Gastrocnemius medialis (tissue), 4 donors: ENCODE measurements at regions of chr10 and their contacts with region 1.

Region 1: GRCh38 chr10:123154092-123154921 is at the start of gene BUB3:
- DNase-seq: peak; percentile 98 to 99
- ATAC-seq: peak; percentile 99
- H3K4me3 ChIP-seq: peak within 1 kb of the TSS; percentile 68 to 99 (median 90)
- H3K27ac ChIP-seq: peak within 1 kb of the TSS; percentile 81 to 90 (median 86)
- H3K4me1 ChIP-seq: peaks cover 32 to 34% of the 10 kb centered on the region in 2 donors
- H3K27me3 ChIP-seq: peaks cover 39 to 43% (median 41%) of the 10 kb centered on the region in 3 donors
- CTCF ChIP-seq: peak in 3 of 5 experiments; percentile 32 to 53 (median 40)
- POLR2A ChIP-seq: peak; percentile 72 to 76
- total RNA-seq, gene BUB3: 43.0 to 84.0 (median 49.2) TPM

Region 2: DNA sequence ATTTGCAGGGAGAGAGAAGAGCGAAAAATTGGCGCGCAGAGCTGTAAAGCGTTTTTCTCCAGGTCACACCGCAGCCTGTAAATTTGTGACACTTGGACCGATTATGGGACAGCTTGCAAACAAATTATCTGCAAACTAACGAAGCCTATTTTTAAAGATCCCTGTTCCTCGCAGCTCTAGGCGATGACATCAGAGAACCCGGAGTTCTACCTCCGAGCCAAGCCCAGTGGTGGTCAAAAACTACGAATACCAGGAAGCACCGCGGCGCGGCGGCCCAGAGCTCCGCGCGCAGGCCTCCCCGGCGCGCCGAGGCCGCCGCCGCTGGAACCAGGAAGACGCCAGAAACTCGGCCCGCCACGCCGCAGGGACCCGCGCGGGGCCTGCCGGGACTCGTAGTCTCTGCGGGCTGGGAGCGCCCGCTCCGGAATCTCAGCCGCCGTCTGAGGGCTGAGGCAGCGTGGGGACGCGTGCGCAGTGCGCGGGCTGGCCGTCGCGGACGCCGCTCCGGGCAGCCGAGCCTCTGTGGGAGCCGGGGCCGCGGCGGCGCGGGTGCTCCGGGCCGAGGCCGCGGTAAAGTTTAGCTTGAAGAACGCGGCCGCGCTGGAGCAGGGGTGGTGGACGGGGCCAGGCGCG is 780.0 kb before region 1 on chr10 and contains the start of gene PLEKHA1:
- in situ Hi-C with region 1: no loop called
- intact Hi-C with region 1: loop called (anchors 2 kb)
- DNase-seq: peak; percentile 91 to 94
- ATAC-seq: peak; percentile 90 to 92
- H3K4me3 ChIP-seq: peak within 1 kb of the TSS; percentile 64 to 96 (median 70)
- H3K27ac ChIP-seq: peak within 1 kb of the TSS; percentile 82 to 99 (median 92)
- H3K4me1 ChIP-seq: peaks cover 31 to 37% of the 10 kb centered on the region in 2 donors
- H3K27me3 ChIP-seq: no peaks in the 10 kb centered on the region
- CTCF ChIP-seq: no peak
- POLR2A ChIP-seq: peak; percentile 95 to 96
- total RNA-seq, gene PLEKHA1: 33.7 to 54.0 (median 37.8) TPM

Region 3: DNA sequence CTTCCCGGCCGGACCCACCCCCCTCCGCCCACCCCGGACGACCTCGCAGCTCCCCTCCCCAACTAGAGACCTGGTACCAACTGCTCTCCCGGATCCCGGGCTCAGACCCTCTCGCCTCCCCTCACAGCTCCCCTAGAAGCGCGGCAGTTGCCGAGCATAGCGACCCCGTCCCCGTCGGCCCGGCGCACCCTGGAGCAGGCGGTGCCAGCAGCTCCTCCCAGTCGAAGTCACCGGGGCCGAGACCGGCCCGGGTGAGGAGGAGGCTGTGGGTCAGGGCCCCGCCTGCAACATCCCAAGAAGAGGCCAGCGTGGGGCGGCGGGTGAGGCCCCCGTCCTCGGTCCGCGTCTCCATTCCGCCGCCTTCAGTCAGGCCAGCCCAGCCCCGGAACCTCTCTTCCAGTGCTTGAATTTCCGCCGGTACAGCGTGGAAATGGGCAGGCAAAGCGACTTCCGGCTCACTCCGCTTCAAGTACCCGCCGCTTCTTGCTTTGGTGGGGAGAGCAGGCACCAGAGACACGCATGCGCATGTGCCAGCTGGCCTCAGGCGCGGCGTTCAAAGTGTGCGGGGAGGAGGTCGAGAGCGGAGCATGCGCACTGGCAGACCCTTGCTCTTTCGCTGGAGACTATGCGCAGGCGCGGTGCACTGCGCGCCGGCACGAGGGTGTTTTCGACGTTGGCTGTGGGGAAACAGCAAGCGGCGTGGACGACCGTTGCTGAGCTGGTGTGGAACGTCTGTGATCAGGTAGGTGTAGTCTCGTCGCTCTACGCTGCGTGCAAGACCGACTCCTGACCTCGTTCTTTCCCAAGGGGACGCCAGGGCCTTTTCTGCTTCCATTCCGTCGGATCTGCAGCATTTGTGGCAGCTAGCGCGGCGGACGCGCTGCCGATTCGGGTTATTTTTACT is 200.2 kb before region 1 on chr10 and contains the start of gene C10orf88:
- in situ Hi-C with region 1: loop called in 1 of 4 experiments (anchors 25 kb)
- intact Hi-C with region 1: loop called (anchors 5 kb)
- DNase-seq: peak; percentile 95 to 98
- ATAC-seq: peak; percentile 99
- H3K4me3 ChIP-seq: peak within 1 kb of the TSS; percentile 83 to 92 (median 88)
- H3K27ac ChIP-seq: peak within 1 kb of the TSS; percentile 75 to 86 (median 81)
- H3K4me1 ChIP-seq: peaks cover 10 to 22% of the 10 kb centered on the region in 2 donors
- H3K27me3 ChIP-seq: no peaks in the 10 kb centered on the region
- CTCF ChIP-seq: no peak
- POLR2A ChIP-seq: no peak
- total RNA-seq, gene C10orf88: 4.2 to 9.6 (median 6.8) TPM

Region 4: GRCh38 chr10:122980209-122981065 is 173.9 kb before region 1 on chr10 and contains the start of gene PSTK:
- in situ Hi-C with region 1: loop called in 1 of 4 experiments (anchors 10 kb)
- intact Hi-C with region 1: loop called (anchors 2 kb)
- DNase-seq: peak; percentile 80 to 84
- ATAC-seq: peak; percentile 97 to 98
- H3K4me3 ChIP-seq: peak within 1 kb of the TSS; percentile 72 to 88 (median 78)
- H3K27ac ChIP-seq: peak within 1 kb of the TSS; percentile 85 to 96 (median 90)
- H3K4me1 ChIP-seq: peaks cover 11 to 12% of the 10 kb centered on the region in 2 donors
- H3K27me3 ChIP-seq: no peaks in the 10 kb centered on the region
- CTCF ChIP-seq: peak; percentile 97 to 98 (median 98)
- POLR2A ChIP-seq: peak in 1 of 2 donors; percentile 45
- total RNA-seq, gene PSTK: 2.2 to 7.0 (median 4.4) TPM

Region 5: DNA sequence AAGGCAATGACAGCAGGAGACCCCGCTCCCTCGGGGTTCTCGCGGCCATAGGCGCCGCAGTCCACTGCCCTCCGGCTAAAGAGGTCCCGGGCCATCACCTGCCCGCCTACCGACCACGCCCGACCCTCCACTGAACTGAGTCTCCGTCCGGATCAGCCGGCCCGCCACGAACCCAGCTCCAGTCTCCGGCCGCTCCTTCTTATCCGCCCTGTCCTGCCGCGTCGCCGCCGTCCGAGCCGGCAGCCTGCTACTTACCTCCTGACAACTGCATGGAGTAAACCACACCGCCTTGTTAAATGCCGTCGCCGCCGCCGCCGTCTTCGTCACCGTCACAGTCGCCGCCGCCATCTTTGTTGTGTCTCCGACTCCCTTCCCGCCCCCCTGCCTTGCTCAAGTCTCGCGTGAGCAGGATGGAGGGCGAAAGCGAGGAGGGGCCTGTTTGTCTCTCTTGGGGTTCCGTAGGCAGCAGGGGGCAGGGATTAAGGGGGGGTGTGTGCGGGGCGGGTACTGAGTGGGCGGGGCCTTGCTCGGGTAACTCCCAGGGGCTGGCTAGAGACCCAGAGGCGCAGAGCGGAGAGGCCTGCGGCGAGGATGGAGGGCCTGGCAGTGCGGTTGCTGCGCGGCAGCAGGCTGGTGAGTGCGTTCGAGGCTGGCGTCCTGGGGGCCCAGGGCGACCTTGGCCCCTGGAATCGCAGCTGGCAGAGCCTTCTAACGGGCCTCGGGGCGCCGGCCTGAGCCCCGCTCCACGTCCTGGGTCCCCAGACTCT is 145.7 kb before region 1 on chr10 and contains the starts of genes ACADSB and IKZF5:
- in situ Hi-C with region 1: loop called in 1 of 4 experiments (anchors 10 kb)
- intact Hi-C with region 1: loop called (anchors 1 kb)
- DNase-seq: peak; percentile 97
- ATAC-seq: peak; percentile 95 to 96
- H3K4me3 ChIP-seq: peak within 1 kb of the TSS; percentile 95 to 99 (median 97)
- H3K27ac ChIP-seq: peak within 1 kb of the TSS; percentile 93 to 99 (median 96)
- H3K4me1 ChIP-seq: peaks cover 38 to 46% of the 10 kb centered on the region in 2 donors
- H3K27me3 ChIP-seq: no peaks in the 10 kb centered on the region
- CTCF ChIP-seq: no peak
- POLR2A ChIP-seq: peak; percentile 78 to 85
- total RNA-seq, gene ACADSB: 16.2 to 40.2 (median 22.0) TPM
- total RNA-seq, gene IKZF5: 4.3 to 11.0 (median 7.7) TPM

Region 6: GRCh38 chr10:123019941-123020703 is 134.2 kb before region 1 on chr10:
- in situ Hi-C with region 1: loop called in 1 of 4 experiments (anchors 10 kb)
- intact Hi-C with region 1: no loop called
- DNase-seq: no peak
- ATAC-seq: no peak
- H3K4me3 ChIP-seq: no peak overlapping the region
- H3K27ac ChIP-seq: no peak overlapping the region
- H3K4me1 ChIP-seq: no peaks in the 10 kb centered on the region
- H3K27me3 ChIP-seq: no peaks in the 10 kb centered on the region
- CTCF ChIP-seq: no peak
- POLR2A ChIP-seq: no peak

Region 7: GRCh38 chr10:123132576-123133477 is 21.5 kb before region 1 on chr10:
- in situ Hi-C with region 1: no loop called
- intact Hi-C with region 1: loop called (anchors 2 kb)
- DNase-seq: peak; percentile 39 to 62
- ATAC-seq: peak; percentile 84
- H3K4me3 ChIP-seq: peak overlapping the region in 3 of 4 donors; percentile 15 to 31 (median 29)
- H3K27ac ChIP-seq: no peak overlapping the region
- H3K4me1 ChIP-seq: peaks cover 24 to 26% of the 10 kb centered on the region in 2 donors
- H3K27me3 ChIP-seq: peaks cover 92 to 97% (median 97%) of the 10 kb centered on the region in 3 donors
- CTCF ChIP-seq: peak; percentile 62 to 86 (median 80)
- POLR2A ChIP-seq: no peak

Region 8: DNA sequence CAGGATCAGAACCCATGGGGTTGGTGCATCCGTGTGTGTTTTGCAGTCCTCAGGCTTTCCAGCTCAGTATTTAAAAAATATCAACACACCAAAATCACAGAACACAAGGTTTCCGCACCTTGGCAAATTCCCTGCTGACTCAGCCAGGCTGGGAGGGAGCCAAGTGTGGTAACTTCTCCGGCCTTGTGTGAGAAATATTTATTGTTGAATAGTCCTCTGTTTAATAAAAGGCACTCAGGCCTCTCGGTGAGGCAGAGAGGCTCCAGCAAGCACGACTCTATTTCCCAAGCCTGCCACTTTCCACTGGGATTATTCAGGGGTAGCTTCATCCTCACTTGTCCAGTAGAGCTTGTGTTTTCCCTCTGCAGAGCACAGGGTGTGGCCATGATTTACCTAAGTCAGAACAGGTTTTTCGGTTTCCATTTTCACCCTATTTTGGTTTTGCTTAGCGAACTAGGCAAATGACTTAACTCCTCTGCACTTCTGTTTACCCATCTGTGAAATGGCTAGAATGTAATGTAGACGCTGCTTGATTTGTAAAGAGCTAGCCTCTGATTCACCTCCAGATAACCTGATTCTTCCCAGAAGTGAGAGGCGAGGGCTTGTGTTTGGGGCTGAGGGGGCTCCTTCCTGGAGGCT is 952.1 kb after region 1 on chr10:
- in situ Hi-C with region 1: no loop called
- intact Hi-C with region 1: no loop called
- DNase-seq: peak in 1 of 2 donors; percentile 37
- ATAC-seq: peak; percentile 52 to 68
- H3K4me3 ChIP-seq: no peak overlapping the region
- H3K27ac ChIP-seq: peak overlapping the region; percentile 31 to 73 (median 54)
- H3K4me1 ChIP-seq: peaks cover 10 to 15% of the 10 kb centered on the region in 2 donors
- H3K27me3 ChIP-seq: no peaks in the 10 kb centered on the region
- CTCF ChIP-seq: no peak
- POLR2A ChIP-seq: no peak